ENCODE measurements at regions of chr2 and their contacts with region 1.

Region 1: GRCh38 chr2:131154071-131154531 is 49.0 kb downstream of the PLEKHB2 start:
- DNase-seq: peak; percentile 54
- ATAC-seq: peak; percentile 98
- H3K4me3 ChIP-seq: no peak overlapping the region
- H3K27ac ChIP-seq: no peak overlapping the region
- H3K4me1 ChIP-seq: no peaks in the 10 kb centered on the region
- H3K27me3 ChIP-seq: no peaks in the 10 kb centered on the region; the same call in 1 of the 2 replicates
- CTCF ChIP-seq: peak; percentile 86
- POLR2A ChIP-seq: no peak
- RAD21 ChIP-seq: peak; percentile 86

Region 2: DNA sequence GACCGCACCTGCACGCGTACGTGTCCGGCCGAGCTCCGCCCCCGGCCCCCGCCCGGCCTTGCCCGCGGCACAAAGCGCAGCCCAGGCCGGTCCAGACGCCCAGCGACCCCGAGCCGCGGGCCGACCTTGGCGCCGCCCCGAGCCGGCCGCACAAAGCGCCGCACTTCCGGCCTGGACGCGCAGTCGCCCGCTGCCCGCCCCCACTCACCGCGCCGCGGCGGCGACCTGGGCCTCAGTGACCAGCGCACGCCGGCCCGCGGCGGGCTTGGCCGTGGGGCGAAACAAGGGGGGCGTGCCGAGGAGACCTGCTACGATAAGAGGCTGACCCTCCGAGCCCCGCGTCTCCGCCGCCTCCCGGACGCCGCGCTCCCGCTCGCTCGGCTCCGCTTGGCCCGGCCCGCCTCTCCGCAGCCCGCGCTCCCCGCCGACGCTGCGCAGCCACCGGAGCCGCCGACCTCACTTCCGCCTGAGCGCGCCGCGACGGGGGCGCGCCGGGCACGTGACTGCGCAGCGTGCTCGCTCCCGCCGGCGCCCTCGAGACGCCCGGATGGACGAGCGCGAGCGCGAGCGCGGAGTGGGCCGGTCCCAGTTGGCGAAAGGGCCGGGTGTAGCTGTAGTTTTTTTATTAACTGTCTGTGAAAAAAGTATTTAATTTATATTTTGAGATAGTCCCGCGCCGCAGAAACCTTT is 61.0 kb before region 1 on chr2 and contains the start of gene FAM168B:
- CTCF ChIA-PET with region 1: no interaction called
- POLR2A ChIA-PET with region 1: no interaction called
- dilution Hi-C with region 1: no loop called
- in situ Hi-C with region 1: no loop called
- intact Hi-C with region 1: no loop called
- DNase-seq: peak; percentile 88
- ATAC-seq: peak; percentile 91
- H3K4me3 ChIP-seq: peak within 1 kb of the TSS; percentile 89
- H3K27ac ChIP-seq: peak within 1 kb of the TSS; percentile 96
- H3K4me1 ChIP-seq: no peaks in the 10 kb centered on the region
- H3K27me3 ChIP-seq: no peaks in the 10 kb centered on the region
- CTCF ChIP-seq: no peak
- POLR2A ChIP-seq: peak; percentile 93
- RAD21 ChIP-seq: no peak
- total RNA-seq, gene FAM168B: 76.4 and 86.7 TPM in 2 replicates

Region 3: DNA sequence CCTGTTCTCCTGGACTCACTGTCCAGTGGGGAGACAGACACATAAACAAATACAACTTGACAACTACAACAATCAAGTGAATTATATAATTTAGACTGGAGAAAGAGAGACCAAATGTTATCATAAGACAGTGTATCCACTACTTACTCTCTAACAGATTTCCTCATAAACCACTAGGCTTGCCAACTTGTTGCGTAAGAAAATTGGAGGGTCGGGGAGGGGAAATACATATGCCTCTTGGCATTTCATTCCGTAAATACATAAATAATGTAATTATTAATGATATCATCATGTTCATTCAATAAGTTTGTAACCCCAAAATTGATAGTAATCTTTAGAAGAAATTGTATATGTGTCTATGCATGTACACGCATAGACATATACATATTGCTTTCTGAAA is 194.9 kb after region 1 on chr2:
- CTCF ChIA-PET with region 1: no interaction called
- POLR2A ChIA-PET with region 1: no interaction called
- dilution Hi-C with region 1: no loop called
- in situ Hi-C with region 1: loop called (anchors 25 kb)
- intact Hi-C with region 1: no loop called
- DNase-seq: no peak
- ATAC-seq: no peak
- H3K4me3 ChIP-seq: no peak overlapping the region
- H3K27ac ChIP-seq: no peak overlapping the region
- H3K4me1 ChIP-seq: no peaks in the 10 kb centered on the region
- H3K27me3 ChIP-seq: no peaks in the 10 kb centered on the region
- CTCF ChIP-seq: no peak
- POLR2A ChIP-seq: no peak
- RAD21 ChIP-seq: no peak

Region 4: DNA sequence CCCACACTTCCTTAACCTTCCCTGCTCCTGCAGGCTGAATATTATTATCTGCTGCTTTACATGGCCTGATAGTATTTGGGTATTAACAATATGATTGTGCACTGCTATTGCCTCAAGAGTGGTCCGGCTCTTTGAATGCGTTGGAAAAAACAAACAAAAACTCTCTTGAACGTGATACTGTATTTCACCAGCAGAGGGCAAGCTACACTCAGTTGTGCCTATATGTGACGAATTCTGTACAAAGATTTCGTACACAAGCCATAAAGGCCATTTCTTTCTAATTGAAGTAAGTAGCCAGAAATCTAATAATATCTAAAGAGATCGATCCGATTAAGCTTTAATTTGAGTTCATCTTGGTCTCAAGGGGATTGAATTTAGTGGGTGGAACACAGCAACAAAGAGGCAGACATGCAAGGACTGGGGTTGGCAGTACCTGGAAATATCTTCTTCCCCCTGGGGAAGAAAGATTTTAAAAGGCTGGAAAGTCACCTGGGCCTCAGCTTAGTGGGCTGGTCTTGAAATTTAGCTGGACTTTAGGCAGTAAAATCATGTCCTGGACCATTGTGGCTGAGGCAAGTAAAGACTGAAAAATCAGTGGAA is 259.1 kb after region 1 on chr2:
- CTCF ChIA-PET with region 1: no interaction called
- POLR2A ChIA-PET with region 1: no interaction called
- dilution Hi-C with region 1: no loop called
- in situ Hi-C with region 1: no loop called
- intact Hi-C with region 1: loop called (anchors 2 kb)
- DNase-seq: peak; percentile 63
- ATAC-seq: peak; percentile 95
- H3K4me3 ChIP-seq: no peak overlapping the region
- H3K27ac ChIP-seq: no peak overlapping the region
- H3K4me1 ChIP-seq: no peaks in the 10 kb centered on the region
- H3K27me3 ChIP-seq: peaks cover 26% of the 10 kb centered on the region
- CTCF ChIP-seq: peak; percentile 80
- POLR2A ChIP-seq: no peak
- RAD21 ChIP-seq: peak; percentile 83

Region 5: DNA sequence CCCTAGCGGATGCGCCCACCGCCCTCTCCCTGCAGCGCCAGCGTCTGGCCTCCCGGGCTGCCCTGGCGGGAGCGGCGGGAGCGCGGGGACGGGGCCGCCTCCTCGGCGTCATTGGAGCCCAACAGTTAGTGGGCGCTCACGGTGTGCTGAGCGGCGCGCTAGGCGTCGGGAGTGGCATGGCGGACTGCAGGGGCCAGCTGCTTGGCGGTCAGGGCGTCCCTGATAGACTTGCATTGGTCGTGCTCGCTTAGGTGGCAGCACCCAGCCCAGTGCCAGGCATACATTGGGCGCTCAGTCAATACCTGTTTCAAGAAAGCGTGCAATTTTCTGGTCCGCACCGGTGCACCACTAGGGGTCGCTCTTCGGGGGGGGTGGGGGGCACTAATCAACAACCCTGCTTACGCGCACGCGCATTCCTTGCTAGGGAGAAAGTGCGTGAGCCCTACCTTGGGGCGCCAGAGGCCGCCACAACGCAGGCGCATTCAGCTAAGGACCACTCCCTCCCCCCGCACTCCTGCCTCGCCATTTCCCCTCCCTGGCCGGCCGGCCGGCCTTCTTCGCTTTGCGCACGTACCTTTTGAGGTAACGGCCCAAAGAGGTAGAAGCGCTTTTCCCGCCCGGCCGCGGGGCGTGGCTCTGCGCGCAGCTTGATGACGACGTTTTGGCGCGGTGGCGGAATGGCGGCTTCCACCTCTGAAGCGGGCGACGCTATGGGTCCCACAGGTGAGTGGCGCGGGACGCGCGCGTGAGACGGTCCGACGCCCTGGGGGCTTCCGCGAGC is 338.5 kb after region 1 on chr2:
- CTCF ChIA-PET with region 1: no interaction called
- POLR2A ChIA-PET with region 1: no interaction called
- dilution Hi-C with region 1: no loop called
- in situ Hi-C with region 1: no loop called
- intact Hi-C with region 1: loop called (anchors 1 kb)
- DNase-seq: peak; percentile 90
- ATAC-seq: peak; percentile 82
- H3K4me3 ChIP-seq: peak overlapping the region; percentile 76
- H3K27ac ChIP-seq: peak overlapping the region; percentile 74
- H3K4me1 ChIP-seq: 0 out of 2 replicates have a peak, but pooled peaks cover 2% of the 10 kb centered on the region
- H3K27me3 ChIP-seq: no peaks in the 10 kb centered on the region
- CTCF ChIP-seq: peak; percentile 66
- POLR2A ChIP-seq: no peak
- RAD21 ChIP-seq: no peak

Region 6: DNA sequence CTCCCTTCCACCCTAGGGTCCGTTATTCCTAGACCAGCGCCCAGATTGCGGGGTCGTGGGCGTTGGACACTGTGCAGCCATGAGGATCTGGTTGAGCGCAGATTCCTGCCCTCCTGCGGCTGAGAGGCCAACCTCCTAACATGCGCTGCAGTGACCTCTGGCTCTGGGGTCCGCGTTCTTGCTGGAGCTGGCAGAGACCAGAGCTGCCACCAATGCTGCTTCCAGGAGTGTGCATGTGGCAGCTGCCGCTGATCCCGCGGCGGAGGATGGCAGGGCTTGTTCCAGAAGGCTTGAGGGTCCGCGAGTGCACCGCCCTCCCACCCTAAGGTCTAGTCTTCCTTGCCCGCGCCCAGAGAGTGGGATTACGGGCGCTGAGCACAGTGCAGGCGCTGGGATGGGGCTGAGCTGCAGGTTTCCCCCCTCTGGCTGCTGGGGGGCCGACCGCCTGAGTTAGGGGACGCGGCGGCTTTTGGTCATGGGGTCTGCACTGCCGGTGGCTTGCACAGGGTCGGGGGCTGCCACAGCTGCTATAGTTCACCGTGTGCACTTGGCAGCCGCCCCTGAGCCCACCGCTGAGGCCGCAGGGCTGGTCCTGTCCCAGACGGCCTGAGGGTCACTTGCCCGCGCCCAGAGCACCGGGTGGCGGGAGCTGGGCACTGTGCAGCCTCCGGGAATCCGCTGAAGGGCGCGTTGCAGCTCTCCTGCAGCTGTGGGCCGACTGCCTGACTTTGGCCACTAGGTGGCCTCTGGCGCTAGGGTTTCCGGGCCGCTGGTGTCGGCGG is 519.5 kb after region 1 on chr2:
- CTCF ChIA-PET with region 1: no interaction called
- POLR2A ChIA-PET with region 1: no interaction called
- dilution Hi-C with region 1: no loop called
- in situ Hi-C with region 1: no loop called
- intact Hi-C with region 1: loop called (anchors 2 kb)
- DNase-seq: peak; percentile 44
- ATAC-seq: peak; percentile 93
- H3K4me3 ChIP-seq: no peak overlapping the region; the same call in 1 of the 2 replicates
- H3K27ac ChIP-seq: no peak overlapping the region
- H3K4me1 ChIP-seq: peaks cover 11% of the 10 kb centered on the region
- H3K27me3 ChIP-seq: no peaks in the 10 kb centered on the region; the same call in 1 of the 2 replicates
- CTCF ChIP-seq: peak; percentile 81
- POLR2A ChIP-seq: no peak
- RAD21 ChIP-seq: peak; percentile 81